Endothelial cell of umbilical vein (primary cell): ENCODE measurements at regions of chr3 and their contacts with region 1.

Region 1: GRCh38 chr3:39981547-39982184 is 172.3 kb downstream of the MYRIP start:
- DNase-seq: peak; percentile 63
- H3K4me3 ChIP-seq: no peak overlapping the region
- H3K27ac ChIP-seq: no peak overlapping the region
- H3K4me1 ChIP-seq: peaks cover 18% of the 10 kb centered on the region
- H3K27me3 ChIP-seq: no peaks in the 10 kb centered on the region
- CTCF ChIP-seq: no peak
- POLR2A ChIP-seq: no peak

Region 2: DNA sequence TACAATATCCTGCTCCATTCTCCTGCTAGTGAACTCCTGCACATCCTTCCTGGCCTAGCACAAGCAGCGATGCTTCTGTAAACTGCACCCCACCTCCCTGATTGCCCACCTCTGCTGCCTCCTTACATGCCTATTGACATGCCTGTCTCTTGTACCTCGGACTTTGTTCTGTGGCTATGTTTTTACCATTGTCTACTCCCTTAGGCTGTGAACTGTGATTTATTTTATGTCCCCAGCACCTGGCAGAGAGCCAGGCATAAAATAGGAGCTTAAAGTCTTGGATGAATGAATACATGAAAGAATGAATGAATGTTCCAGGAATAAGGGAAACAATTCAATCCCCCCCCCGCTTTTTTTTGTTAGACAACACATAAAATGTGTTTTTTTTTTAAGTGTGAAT is 37.7 kb after region 1 on chr3:
- CTCF ChIA-PET with region 1: no interaction called
- POLR2A ChIA-PET with region 1: no interaction called
- dilution Hi-C with region 1: no loop called
- intact Hi-C with region 1: loop called (anchors 1 kb)
- DNase-seq: no peak
- H3K4me3 ChIP-seq: no peak overlapping the region
- H3K27ac ChIP-seq: no peak overlapping the region
- H3K4me1 ChIP-seq: peaks cover 4% of the 10 kb centered on the region
- H3K27me3 ChIP-seq: no peaks in the 10 kb centered on the region
- CTCF ChIP-seq: no peak
- POLR2A ChIP-seq: no peak

Region 3: GRCh38 chr3:40745381-40746106 is 763.9 kb after region 1 on chr3:
- CTCF ChIA-PET with region 1: no interaction called
- POLR2A ChIA-PET with region 1: no interaction called
- dilution Hi-C with region 1: no loop called
- intact Hi-C with region 1: no loop called
- DNase-seq: no peak
- H3K4me3 ChIP-seq: no peak overlapping the region
- H3K27ac ChIP-seq: no peak overlapping the region
- H3K4me1 ChIP-seq: no peaks in the 10 kb centered on the region
- H3K27me3 ChIP-seq: no peaks in the 10 kb centered on the region
- CTCF ChIP-seq: no peak
- POLR2A ChIP-seq: no peak